Ascending aorta (tissue), 2 donors: ENCODE measurements at regions of chr5 and their contacts with region 1.

Region 1: DNA sequence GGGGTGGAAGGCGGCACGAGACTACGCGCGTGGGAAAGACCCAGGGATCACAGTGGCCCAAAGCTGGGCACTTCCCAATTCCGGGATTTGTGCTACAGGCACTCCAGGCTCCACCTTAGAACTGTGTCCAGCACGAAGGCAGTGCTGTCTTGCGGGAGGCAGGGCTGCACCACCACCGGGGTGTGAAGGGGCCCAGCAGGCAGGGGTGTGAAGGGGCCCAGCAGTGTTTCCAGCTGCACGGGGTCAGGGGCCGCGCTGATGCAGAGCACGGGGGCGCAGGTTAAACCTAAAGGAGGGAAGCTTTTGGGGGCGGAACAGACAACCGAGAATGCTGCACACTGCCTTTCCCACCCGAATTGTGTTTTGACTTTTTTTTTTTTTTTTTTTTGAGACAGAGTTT is 1.1 kb upstream of the PDCD6 start:
- DNase-seq: peak in 1 of 2 donors; percentile 62
- H3K4me3 ChIP-seq: peak overlapping the region in 1 of 2 donors; percentile 99
- H3K27ac ChIP-seq: no peak overlapping the region
- H3K4me1 ChIP-seq: peaks cover 0 to 7% of the 10 kb centered on the region in 2 donors
- H3K27me3 ChIP-seq: no peaks in the 10 kb centered on the region
- CTCF ChIP-seq: no peak

Region 2: GRCh38 chr5:30131-30530 is 240.2 kb before region 1 on chr5:
- intact Hi-C with region 1: no loop called
- DNase-seq: no peak
- H3K4me3 ChIP-seq: no peak overlapping the region
- H3K27ac ChIP-seq: no peak overlapping the region
- H3K4me1 ChIP-seq: no peaks in the 10 kb centered on the region
- H3K27me3 ChIP-seq: no peaks in the 10 kb centered on the region
- CTCF ChIP-seq: no peak

Region 3: GRCh38 chr5:92401-93220 is 177.7 kb before region 1 on chr5:
- intact Hi-C with region 1: no loop called
- DNase-seq: no peak
- H3K4me3 ChIP-seq: no peak overlapping the region
- H3K27ac ChIP-seq: no peak overlapping the region
- H3K4me1 ChIP-seq: peaks cover 0 to 3% of the 10 kb centered on the region in 2 donors
- H3K27me3 ChIP-seq: no peaks in the 10 kb centered on the region
- CTCF ChIP-seq: no peak

Region 4: GRCh38 chr5:231661-232060 is 38.7 kb before region 1 on chr5:
- intact Hi-C with region 1: no loop called
- DNase-seq: no peak
- H3K4me3 ChIP-seq: no peak overlapping the region
- H3K27ac ChIP-seq: no peak overlapping the region
- H3K4me1 ChIP-seq: no peaks in the 10 kb centered on the region
- H3K27me3 ChIP-seq: no peaks in the 10 kb centered on the region
- CTCF ChIP-seq: no peak

Region 5: DNA sequence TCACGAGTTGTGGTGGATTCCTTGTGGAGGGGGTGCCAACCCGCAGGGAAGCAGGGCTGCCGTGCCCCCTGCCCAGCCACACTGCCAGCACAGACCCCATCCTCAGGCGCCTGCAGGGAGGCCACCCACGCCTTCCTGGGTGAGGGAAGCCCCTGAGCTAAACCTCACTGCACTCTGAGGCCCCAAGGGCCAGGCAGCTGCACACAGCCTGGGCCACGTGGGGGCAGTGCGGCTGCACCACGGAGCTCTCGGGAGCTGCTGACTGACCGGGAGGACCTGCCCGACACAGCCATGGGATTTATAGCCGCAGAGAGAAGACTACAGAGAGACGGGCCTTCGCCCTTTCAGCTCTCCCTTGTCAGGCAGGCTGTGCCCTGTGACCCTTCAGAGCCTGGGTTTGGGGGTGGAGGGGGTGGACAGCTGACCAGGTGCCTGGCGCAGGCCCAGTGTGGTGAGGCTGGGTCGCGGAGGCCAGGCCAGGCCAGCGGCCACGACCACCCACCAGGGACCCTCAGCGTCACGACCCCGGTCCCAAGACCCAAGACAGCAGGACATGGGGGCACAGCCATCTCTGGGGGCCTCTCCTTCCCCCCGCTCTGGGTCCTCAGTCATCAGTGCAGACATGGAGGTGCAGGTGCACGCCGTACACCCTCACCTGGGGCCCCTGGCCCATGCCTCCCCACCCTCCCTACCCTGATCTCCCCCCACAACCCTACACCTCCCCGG is 46.9 kb after region 1 on chr5:
- intact Hi-C with region 1: no loop called
- DNase-seq: no peak
- H3K4me3 ChIP-seq: no peak overlapping the region
- H3K27ac ChIP-seq: no peak overlapping the region
- H3K4me1 ChIP-seq: peaks cover 9% of the 10 kb centered on the region in 2 donors
- H3K27me3 ChIP-seq: peaks cover 9% of the 10 kb centered on the region
- CTCF ChIP-seq: peak in 1 of 3 experiments; percentile 40

Region 6: DNA sequence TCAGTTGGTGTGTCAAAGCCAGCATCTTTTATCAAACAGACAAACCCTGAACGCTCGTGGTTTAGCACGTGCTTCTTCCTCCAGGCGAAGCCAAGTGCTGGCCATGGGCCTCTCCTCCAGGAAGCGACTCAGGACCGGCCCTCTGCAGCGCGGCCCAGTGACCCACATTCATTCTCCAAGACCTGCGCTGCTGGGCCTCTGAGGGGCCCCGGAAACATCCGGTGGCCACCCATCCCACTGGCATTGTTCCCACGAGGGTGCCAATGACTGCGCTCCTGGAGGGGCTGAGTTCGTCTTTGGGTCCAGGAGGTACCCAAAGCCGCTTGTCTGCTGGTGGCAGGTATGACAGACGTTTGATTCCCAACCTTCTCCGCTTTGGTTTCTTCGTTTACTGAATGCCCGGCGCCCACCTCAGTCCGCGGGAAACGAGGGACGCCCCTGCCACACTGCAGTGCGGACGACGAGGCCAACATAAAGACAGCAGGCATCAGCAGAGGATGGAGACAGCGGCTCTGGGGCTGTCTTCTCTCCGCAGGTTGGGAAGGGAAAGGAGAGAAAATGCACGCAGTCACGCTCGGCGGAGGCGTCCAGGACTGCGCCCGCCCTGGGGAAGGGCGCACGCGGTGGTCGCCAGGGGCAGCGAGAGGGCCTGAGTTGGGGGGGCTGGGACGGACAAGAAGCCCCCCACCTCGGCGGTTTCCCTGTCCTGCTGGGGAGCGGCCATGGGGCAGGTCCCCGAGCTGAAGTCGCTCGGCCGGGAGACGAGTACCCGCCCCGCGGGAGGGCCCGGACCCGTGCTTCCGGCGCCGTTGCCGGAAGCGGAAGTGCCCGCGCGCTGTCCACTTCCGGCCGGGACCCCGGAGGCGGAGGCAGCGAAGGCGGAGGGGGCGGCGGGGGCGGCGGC is 172.2 kb after region 1 on chr5 and contains the start of gene EXOC3:
- intact Hi-C with region 1: loop called (anchors 10 kb)
- DNase-seq: peak in 1 of 2 donors; percentile 82
- H3K4me3 ChIP-seq: peak within 1 kb of the TSS; percentile 71 to 92
- H3K27ac ChIP-seq: peak within 1 kb of the TSS; percentile 76
- H3K4me1 ChIP-seq: peaks cover 12% of the 10 kb centered on the region in 2 donors
- H3K27me3 ChIP-seq: no peaks in the 10 kb centered on the region
- CTCF ChIP-seq: no peak
- total RNA-seq, gene EXOC3: 56.7 TPM

Region 7: GRCh38 chr5:1633605-1634336 is 1363.4 kb after region 1 on chr5:
- intact Hi-C with region 1: loop called (anchors 5 kb)
- DNase-seq: peak; percentile 30 to 86
- H3K4me3 ChIP-seq: peak overlapping the region; percentile 79 to 87
- H3K27ac ChIP-seq: peak overlapping the region; percentile 90
- H3K4me1 ChIP-seq: peaks cover 0 to 5% of the 10 kb centered on the region in 2 donors
- H3K27me3 ChIP-seq: no peaks in the 10 kb centered on the region
- CTCF ChIP-seq: no peak